Activated T-helper 2 cell treated with anti-CD3 and anti-CD28 coated beads, Interferon-gamma antibody, Interleukin-2, Interleukin-4, amounts not matched to agents 10 μg/mL and 5 μg/mL and 100 μg/mL, durations not matched to agents 14 hours and 24 hours and 36 hours (primary cell): ENCODE measurements at regions of chr11 and their contacts with region 1.

Region 1: DNA sequence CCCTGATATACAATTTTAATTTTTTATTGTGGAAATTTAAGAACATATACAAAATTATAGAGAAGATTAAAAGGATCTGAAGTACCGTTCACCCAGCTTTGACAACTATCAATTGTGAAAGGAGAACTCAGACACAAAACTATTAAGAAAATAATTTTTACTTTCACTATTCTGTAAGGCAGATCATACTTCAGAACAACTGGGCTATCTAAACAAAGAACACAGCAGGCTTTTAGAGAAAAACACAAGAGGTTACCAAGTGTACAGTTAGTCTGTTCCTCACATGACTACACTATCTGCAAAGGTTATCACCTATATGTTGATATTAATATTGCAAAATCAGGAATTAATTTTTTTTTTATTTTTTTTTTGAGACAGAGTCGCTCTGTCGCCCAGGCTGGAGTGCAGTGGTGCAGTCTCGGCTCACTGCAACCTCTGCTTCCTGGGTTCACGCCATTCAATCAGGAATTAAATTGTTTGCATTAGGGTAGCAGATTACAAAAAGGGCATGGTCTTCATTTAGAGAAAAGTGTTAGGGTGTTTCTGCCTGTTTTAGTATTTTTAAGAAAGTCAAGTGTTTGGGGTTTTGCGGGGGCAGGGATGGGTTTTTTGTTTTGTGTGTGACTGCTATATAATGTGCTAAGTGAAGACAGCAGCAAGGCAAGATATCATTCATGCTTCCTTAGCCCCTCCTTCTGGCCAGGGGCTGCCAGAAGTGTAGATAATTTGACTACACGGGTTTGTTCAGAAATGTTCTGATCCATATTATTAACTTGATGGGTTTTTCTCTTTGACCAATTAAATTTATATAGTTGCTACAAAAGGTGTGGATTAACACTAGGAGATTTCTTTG is 27.6 kb upstream of the SIK2 start:
- DNase-seq: no peak
- H3K4me3 Mint-ChIP-seq: no peak overlapping the region
- H3K27ac Mint-ChIP-seq: no peak overlapping the region
- H3K4me1 Mint-ChIP-seq: no peaks in the 10 kb centered on the region
- H3K27me3 Mint-ChIP-seq: peaks cover 6% of the 10 kb centered on the region

Region 2: GRCh38 chr11:111561791-111562325 is 12.7 kb before region 1 on chr11:
- intact Hi-C with region 1: no loop called
- DNase-seq: no peak
- H3K4me3 Mint-ChIP-seq: no peak overlapping the region
- H3K27ac Mint-ChIP-seq: no peak overlapping the region
- H3K4me1 Mint-ChIP-seq: no peaks in the 10 kb centered on the region
- H3K27me3 Mint-ChIP-seq: peaks cover 2% of the 10 kb centered on the region

Region 3: DNA sequence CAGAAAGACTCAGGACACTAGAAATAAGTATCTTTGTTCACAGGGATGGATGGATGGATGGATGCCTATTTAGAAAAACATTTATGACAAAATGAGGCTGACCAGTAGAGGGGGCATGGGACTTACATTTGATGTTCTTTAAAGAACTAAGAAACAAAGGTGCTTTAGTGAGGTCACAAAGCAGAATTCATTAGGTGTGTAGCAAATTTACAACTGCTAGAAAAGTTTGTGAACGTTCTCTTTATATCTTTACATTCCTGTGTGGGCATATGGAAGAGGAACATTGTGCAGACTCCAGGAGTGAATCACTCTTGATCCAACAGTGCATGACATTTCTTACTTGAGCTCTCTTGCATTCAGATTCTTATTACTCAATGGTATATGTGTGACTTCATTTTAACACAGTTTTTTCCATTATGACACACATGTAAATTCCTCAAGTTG is 11.8 kb after region 1 on chr11:
- intact Hi-C with region 1: loop called (anchors 2 kb)
- DNase-seq: no peak
- H3K4me3 Mint-ChIP-seq: no peak overlapping the region
- H3K27ac Mint-ChIP-seq: no peak overlapping the region
- H3K4me1 Mint-ChIP-seq: peaks cover 2% of the 10 kb centered on the region
- H3K27me3 Mint-ChIP-seq: peaks cover 5% of the 10 kb centered on the region